ENCODE measurements at regions of chr5 and their contacts with region 1.

Region 1: GRCh38 chr5:91419571-91420537 is 36.7 kb upstream of the ARRDC3 start:
- DNase-seq: peak; percentile 23

Region 2: GRCh38 chr5:90866333-90866732 is 553.5 kb before region 1 on chr5:
- CTCF ChIA-PET with region 1: interaction called, 16 read pairs
- POLR2A ChIA-PET with region 1: no interaction called
- DNase-seq: peak; percentile 28

Region 3: DNA sequence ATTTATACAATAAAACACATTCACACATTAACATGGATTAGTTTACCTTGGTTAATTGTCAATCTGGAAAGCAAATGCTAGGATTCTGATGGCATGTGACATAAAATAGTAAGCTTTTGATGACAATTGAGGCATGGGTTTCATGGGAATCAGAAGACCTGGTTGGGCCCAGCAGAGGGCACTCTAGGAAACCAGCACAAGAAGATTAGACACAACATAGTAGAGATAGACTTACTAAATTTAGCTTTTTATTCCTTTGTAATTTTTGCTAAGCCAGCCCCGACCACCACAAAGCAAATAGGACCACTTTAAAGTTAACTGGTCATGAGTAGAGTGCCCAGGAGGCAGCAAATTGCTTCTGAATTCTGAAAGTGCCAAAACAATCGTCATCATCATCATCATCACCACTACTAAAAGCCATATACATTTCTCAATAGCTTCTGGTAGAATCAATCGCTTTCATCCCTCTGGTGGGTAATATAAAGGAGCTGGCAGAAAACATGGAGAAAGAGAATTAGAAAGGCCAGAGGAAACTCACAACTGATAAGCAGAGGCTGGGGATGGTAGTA is 200.0 kb before region 1 on chr5:
- CTCF ChIA-PET with region 1: interaction called, 16 read pairs
- POLR2A ChIA-PET with region 1: no interaction called
- DNase-seq: peak; percentile 28

Region 4: DNA sequence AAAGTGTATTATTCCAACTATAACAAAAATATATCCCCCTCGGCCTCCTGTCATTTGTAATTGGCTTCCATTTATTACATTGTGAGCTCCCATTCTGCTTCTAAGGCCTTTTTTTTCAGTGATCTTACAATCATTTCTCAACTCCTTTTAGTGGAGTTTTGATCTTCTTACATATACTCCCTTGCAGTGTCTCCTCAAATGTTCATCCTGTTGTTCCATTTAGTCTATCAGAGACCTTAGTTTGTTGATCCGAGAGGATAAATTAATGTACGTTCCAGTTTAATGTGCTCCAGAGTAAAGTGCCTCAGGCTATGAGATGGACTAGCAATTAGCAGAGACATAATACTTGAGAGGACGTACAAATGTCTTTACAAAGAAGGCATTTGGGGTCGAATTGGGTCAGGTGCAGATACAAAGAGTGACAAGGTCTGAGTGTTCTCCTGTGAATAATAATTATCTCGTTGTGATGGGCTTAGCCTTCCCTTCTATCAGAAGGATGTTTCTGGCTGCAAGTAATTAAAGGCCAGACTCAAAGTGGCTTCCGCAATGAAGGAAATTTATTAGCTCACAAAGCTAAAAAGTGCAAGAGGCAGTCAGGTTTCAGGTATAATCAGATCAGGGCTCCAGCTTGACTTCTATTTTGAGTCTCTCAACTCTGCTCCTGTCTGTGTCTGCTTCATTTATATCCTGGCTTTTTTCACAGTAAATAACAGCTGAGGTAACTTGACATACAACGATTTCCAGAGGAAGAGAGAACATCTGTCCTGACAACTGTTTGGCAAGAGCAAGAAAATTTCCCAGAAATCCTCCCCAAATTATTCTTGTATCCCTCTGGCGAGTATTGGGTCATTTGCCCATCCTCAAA is 66.8 kb before region 1 on chr5:
- CTCF ChIA-PET with region 1: no interaction called
- POLR2A ChIA-PET with region 1: no interaction called
- DNase-seq: no peak

Region 5: GRCh38 chr5:91484662-91485061 is 64.8 kb after region 1 on chr5:
- CTCF ChIA-PET with region 1: no interaction called
- POLR2A ChIA-PET with region 1: no interaction called
- DNase-seq: no peak

Region 6: DNA sequence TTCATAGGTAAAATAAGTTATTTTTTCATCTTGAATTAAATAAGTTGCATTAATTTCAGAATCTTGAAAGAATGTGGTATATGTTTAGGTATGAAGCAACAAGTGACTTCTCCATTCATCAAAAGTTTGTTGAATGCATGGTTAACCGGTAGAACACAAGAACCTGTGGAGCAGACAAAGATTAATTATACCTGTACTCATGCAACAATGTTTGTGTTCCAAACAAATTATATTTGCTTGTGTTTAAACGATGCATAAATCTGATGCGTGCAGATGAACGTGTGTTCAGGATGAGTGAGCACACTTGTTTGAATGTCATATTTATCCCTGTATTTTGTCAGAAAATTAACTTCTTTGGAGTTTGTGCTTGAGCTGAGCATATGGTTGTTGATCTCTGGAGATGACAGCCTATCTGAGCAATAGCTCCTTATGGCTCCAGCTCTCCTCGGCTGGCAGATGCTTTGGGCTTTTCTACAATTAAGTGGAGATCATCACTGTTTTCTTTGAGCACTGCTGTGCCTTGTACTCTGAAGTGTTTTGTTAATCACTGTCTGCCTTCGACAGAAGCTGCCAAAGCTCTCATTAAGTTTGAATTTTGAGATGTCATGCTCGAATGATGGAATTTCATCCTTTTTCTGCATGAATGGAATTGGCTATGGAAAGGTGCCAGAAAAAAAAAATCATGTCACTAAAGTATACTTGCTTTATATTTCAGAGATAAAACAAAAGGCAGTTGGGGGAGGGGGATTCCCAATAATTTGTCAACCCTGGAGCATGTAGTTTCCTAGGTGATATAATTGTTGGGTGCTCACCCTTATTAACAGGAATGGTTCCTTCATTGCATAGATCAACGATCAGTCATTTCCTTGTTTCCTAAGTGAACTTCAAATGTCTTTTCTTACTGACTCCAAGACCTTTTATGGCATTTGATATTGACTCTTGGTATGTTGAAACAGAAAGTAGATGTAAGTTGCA is 465.7 kb after region 1 on chr5:
- CTCF ChIA-PET with region 1: no interaction called
- POLR2A ChIA-PET with region 1: no interaction called
- DNase-seq: no peak

Measured in HEK293T (cell line).